ENCODE measurements at regions of chr11 and their contacts with region 1.

Region 1: DNA sequence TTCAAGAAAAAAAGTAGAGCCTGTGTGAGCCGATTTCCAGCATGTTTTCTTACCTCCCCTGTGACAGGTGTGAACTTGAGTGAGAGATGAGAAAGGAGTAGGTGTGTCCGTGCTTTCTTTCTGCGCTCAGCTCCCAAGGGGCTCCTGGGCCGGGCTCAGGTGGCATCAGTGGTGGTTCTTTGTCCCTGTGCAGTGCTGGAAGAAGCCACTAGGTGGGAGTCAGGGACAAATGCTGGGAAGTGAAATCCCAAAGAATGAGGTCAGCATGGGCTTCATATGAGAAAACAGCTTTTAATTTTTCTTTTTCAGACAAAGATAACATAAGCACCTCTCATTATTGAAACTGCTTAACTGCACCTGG is 57.8 kb downstream of the PPFIBP2 start:
- DNase-seq: peak; percentile 74 to 79
- ATAC-seq: peak; percentile 75 to 83
- H3K4me3 ChIP-seq: no peak overlapping the region
- H3K27ac ChIP-seq: peak overlapping the region; percentile 85 to 88
- H3K4me1 ChIP-seq: peaks cover 56% of the 10 kb centered on the region
- CTCF ChIP-seq: peak; percentile 98
- EP300 ChIP-seq: no peak
- POLR2A ChIP-seq: no peak
- RAD21 ChIP-seq: peak; percentile 98 to 99

Region 2: DNA sequence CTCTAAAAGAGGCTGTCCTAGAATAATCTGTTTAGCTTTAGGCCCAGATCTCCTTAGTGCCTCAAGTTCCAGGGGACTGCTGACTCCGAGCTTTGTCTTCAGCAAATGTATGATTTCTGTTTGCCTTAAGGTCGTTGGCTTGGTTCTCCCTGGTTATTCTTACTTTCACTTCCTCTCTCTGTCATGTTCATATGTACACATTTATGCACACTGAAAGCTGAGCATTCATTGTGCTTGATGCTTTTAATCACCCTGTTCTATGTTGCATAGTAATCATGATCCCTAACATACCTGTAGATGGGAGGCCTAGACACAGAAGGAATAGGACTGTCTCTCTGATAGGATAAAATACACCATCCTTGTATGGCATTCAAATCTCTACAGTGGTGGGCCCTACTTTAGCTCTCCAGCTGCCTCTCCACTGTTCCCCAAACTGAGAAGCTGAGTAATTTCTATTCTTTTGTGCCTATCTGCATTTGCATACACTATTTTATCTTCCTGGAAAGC is 50.6 kb before region 1 on chr11:
- CTCF ChIA-PET with region 1: interaction called, 17 read pairs
- POLR2A ChIA-PET with region 1: no interaction called
- DNase-seq: no peak
- ATAC-seq: no peak
- H3K4me3 ChIP-seq: no peak overlapping the region
- H3K27ac ChIP-seq: no peak overlapping the region
- H3K4me1 ChIP-seq: no peaks in the 10 kb centered on the region
- CTCF ChIP-seq: no peak
- EP300 ChIP-seq: no peak
- POLR2A ChIP-seq: no peak
- RAD21 ChIP-seq: no peak

Region 3: DNA sequence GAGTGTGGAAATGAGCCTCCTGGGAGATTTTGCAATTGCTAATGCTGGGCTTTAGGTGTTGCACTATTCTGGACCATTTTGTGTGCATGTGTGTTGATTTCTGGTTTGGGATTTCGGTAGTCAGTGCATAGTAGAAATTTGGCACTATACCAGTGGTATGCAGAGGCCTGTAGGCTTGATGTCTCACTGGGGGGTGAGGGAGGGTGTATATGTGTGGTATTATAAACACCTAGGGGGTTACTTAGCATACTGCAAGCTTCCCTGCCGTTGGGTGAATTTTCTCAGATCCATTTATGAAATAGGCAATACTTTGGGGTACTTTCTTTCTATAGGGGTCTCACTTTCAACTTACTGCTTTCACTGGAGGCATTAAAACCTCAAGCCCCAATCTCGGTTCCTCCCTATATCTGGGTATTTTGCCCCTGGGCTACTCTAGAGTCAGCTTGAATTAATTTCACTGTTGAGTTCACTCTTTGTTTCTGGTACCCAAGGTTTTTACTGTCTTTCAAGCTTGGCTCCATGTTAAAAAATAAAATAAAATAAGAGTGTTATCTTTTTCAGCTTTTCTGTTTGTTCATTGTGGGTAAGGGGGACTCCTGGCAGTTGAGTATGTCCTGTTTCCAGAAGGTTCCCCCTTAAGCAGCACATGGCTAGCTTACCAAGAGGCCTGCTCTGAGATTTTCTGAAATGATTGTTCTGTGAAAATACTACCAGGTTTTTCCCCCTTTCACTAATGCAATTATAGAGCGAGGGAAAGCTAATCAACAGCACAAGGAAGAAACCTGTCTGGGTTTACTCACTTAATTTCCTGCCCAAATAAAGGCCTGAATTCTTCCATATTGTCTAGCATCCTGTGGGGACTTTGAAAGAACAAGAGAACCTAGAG is 12.0 kb before region 1 on chr11:
- CTCF ChIA-PET with region 1: interaction called, 32 read pairs
- POLR2A ChIA-PET with region 1: no interaction called
- DNase-seq: no peak
- ATAC-seq: no peak
- H3K4me3 ChIP-seq: no peak overlapping the region
- H3K27ac ChIP-seq: no peak overlapping the region
- H3K4me1 ChIP-seq: no peaks in the 10 kb centered on the region
- CTCF ChIP-seq: no peak
- EP300 ChIP-seq: no peak
- POLR2A ChIP-seq: no peak
- RAD21 ChIP-seq: no peak

Region 4: GRCh38 chr11:7605186-7605943 is 33.7 kb after region 1 on chr11:
- CTCF ChIA-PET with region 1: interaction called, 45 read pairs
- POLR2A ChIA-PET with region 1: interaction called, 8 read pairs
- DNase-seq: peak; percentile 79 to 90
- ATAC-seq: peak; percentile 91
- H3K4me3 ChIP-seq: peak overlapping the region; percentile 47
- H3K27ac ChIP-seq: peak overlapping the region; percentile 85 to 92
- H3K4me1 ChIP-seq: peaks cover 81% of the 10 kb centered on the region
- CTCF ChIP-seq: no peak
- EP300 ChIP-seq: peak in 1 of 2 experiments; percentile 27; a peak in 2 of 5 replicates
- POLR2A ChIP-seq: no peak
- RAD21 ChIP-seq: 0 out of 5 replicates have a peak, but pooled peaks have one; percentile 11 to 18

Region 5: GRCh38 chr11:7638710-7639642 is 67.4 kb after region 1 on chr11:
- CTCF ChIA-PET with region 1: interaction called, 17 read pairs
- POLR2A ChIA-PET with region 1: no interaction called
- DNase-seq: no peak
- ATAC-seq: no peak
- H3K4me3 ChIP-seq: no peak overlapping the region
- H3K27ac ChIP-seq: no peak overlapping the region
- H3K4me1 ChIP-seq: no peaks in the 10 kb centered on the region
- CTCF ChIP-seq: no peak
- EP300 ChIP-seq: no peak
- POLR2A ChIP-seq: no peak
- RAD21 ChIP-seq: no peak

Region 6: DNA sequence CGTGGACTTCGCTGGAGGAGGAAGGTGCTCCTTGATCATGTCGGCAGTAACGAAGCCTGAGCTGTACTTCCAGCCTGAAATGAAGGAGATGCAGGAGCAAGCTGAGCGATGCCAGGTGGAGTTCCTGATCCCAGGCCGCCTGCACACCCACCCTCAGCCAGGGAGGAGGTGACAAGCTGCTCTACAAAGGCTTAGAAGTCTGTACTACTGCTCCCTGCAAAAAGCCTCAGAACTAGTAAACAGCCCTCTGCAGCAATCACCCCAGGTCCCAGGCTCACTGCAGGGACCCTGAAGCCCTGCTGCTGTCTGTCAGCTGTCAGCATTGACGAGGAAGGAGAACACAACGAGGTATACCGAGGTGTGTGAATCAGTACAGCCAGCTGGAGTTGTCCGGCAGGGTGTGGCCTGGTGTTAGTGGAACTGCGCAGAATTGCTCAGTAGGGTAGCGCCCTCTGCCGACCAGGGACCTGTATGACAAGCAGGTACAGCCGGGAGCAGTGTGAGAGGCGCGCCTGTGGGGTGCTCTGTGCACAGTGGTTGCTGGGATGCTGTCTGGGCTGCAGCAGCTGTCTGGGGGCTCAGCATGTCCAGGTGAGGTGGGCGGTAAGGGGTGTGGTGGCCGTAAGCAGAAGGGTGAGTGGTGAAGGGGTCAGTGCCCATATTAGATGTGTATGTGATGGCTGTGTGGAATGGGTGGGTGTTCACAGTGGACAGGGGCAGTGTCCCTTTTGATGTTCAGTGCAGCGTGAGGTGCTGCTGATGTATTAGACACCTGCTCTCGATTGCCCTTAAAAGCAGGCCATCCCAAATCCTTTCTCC is 94.1 kb after region 1 on chr11:
- CTCF ChIA-PET with region 1: interaction called, 209 read pairs
- POLR2A ChIA-PET with region 1: interaction called, 4 read pairs
- DNase-seq: peak; percentile 85 to 92
- ATAC-seq: peak; percentile 94 to 99
- H3K4me3 ChIP-seq: no peak overlapping the region
- H3K27ac ChIP-seq: peak overlapping the region in 1 of 2 experiments; percentile 60; a peak in 3 of 6 replicates
- H3K4me1 ChIP-seq: peaks cover 4% of the 10 kb centered on the region; the same call in 2 of the 3 replicates
- CTCF ChIP-seq: peak; percentile 83
- EP300 ChIP-seq: no peak
- POLR2A ChIP-seq: no peak
- RAD21 ChIP-seq: peak; percentile 93 to 96